ENCODE measurements at regions of chr13 and their contacts with region 1.

Region 1: GRCh38 chr13:76473552-76474134 is 412.6 kb downstream of the KCTD12 start:
- DNase-seq: peak; percentile 46
- ATAC-seq: peak; percentile 99

Region 2: GRCh38 chr13:75876360-75877050 is 597.1 kb before region 1 on chr13:
- intact Hi-C with region 1: loop called (anchors 2 kb)
- DNase-seq: peak; percentile 43
- ATAC-seq: peak; percentile 97

Region 3: DNA sequence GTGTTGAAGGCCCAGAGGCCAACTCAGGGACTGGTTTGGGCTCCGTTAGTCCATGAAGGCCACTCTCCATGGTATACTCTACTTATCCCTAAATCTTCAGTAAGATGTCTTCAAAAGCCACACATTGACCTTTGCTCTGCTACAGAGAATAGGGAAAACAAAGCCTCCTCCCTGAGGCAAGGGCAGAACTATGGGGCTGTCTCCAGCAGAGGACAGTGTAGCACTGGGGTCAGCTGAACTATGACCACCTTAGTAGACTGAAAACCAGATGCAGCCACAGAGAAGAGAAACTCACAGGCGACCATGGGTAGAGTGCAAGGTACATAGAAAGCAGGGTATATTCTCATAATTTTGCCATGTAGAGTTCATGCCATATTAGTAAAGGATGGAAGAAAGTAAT is 250.1 kb before region 1 on chr13:
- intact Hi-C with region 1: loop called (anchors 5 kb)
- DNase-seq: no peak
- ATAC-seq: peak; percentile 38

Region 4: DNA sequence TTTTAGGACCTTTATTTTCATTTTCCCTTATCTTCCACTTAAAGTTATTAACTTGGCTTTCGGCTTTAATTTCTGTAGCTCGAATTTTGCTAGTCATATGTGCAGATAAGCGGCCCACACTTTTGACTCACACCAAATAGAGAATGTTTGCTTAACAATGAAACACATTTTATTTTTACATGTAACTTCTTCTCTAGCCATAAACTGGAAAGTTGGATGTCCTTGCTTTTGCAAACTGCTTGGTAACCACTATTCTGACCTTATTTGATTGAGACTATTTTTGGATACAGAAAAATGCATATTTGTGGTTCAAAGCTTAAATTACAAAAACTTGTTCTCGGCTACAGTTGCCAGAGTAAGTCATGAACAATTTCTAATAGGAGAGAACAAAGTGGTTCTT is 187.5 kb before region 1 on chr13:
- intact Hi-C with region 1: no loop called
- DNase-seq: no peak
- ATAC-seq: no peak

Region 5: GRCh38 chr13:76533251-76533650 is 59.6 kb after region 1 on chr13:
- intact Hi-C with region 1: no loop called
- DNase-seq: no peak
- ATAC-seq: no peak

Region 6: DNA sequence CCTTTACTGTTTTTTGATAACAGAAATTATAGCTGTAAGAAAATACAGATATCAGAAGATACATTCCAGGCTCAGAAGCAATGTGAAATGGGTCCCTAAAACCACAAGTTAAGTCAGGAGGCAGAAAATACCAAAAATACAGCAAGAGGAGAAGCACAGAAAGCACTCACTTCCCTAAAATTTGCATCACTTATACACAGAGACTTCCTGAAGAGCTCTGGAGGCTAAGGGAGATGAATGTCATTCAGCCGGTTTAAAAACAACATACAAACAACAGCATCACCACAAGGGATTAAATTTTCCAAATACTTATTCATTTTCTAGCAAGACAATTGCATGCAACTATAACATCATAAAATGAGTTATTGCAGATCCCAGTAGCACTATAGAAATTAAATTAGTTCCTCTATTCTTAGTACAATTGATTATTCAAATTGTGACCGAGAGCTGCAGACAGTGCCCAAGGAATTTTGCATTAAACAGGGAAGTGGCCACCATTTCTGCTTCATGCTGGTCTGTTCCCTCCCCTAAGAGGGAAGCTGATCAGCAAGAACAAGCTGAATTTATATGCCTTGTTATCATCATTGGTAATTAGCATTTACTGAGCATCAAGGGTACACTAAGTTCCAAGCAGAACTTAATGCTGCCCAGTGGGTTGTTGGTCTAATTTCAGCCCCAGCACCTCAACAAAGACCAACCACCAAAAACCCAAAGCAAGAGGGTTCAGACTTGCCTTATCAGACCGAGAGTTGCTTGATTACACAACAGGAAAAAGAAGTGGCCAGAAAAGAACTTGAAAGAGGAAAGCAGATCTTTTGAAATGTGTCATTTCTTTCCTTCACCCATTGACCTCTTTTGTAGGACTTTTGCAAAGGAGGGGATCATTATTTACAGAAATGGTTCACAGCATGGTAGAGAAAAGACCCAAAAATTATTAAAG is 271.9 kb after region 1 on chr13:
- intact Hi-C with region 1: no loop called
- DNase-seq: no peak
- ATAC-seq: peak; percentile 68

Region 7: DNA sequence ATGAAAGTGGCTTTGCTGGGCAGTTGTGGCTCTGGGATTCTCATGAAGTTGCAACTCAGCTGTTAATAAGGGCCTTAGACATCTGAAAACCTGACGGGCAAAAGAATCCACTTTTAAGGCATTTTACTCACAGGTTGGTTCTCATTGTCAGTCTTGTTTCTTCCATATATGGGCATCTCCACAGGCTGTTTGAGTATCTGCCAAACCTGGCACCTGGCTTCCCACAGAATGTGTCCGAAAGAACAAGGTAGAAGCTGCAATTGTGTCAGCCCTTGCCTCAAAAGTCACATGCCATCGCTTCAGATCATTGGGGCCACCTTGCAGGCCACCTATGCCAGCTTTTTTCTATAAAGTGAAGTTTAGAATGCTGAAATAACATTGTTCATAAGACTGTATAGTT is 310.2 kb after region 1 on chr13:
- intact Hi-C with region 1: no loop called
- DNase-seq: no peak
- ATAC-seq: no peak

Region 8: DNA sequence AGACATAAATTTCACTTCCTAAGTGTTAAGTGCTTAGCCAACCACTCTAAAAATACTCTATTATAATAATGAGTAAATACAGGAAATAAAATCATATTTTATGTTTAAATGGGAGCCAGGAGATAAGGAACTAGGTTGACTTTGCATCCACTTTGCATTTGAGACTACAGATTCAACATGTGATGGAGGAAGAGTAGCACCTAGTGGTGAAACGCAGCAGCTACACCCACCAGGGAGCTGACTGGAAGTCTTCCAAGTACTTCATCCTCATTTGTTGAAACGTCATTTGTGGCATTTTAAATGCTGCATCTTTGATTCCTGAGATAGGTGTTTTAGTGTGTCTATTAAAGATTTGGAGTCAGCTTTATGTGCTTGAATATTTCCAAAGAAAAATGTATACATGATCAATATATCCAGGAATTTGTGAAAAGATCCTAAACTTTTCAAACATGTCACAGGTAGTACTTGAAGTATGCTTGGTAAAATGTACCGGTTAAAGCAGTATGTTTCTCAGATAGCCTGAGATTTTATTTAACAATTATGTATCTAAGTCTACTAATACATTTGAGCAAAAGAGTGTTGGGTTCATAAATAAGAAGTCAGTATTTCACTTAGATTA is 430.0 kb after region 1 on chr13:
- intact Hi-C with region 1: loop called (anchors 10 kb)
- DNase-seq: peak; percentile 56
- ATAC-seq: peak; percentile 91

Measured in Right ventricle myocardium superior (tissue), 1 donor.